Mammary epithelial cell (primary cell): ENCODE measurements at regions of chr5 and their contacts with region 1.

Region 1: GRCh38 chr5:137760330-137761188 is 6.4 kb upstream of the HNRNPA0 start:
- DNase-seq: peak; percentile 9
- H3K4me3 ChIP-seq: no peak overlapping the region
- H3K27ac ChIP-seq: no peak overlapping the region
- H3K4me1 ChIP-seq: peaks cover 6% of the 10 kb centered on the region
- H3K27me3 ChIP-seq: no peaks in the 10 kb centered on the region
- CTCF ChIP-seq: no peak

Region 2: GRCh38 chr5:137594717-137595116 is 165.8 kb before region 1 on chr5:
- CTCF ChIA-PET with region 1: no interaction called
- dilution Hi-C with region 1: no loop called
- in situ Hi-C with region 1: no loop called
- intact Hi-C with region 1: no loop called
- DNase-seq: no peak
- H3K4me3 ChIP-seq: no peak overlapping the region
- H3K27ac ChIP-seq: no peak overlapping the region
- H3K4me1 ChIP-seq: no peaks in the 10 kb centered on the region
- H3K27me3 ChIP-seq: peaks cover 3% of the 10 kb centered on the region
- CTCF ChIP-seq: no peak

Region 3: GRCh38 chr5:137847687-137848086 is 87.1 kb after region 1 on chr5:
- CTCF ChIA-PET with region 1: no interaction called
- dilution Hi-C with region 1: loop called (anchors 5 kb)
- in situ Hi-C with region 1: no loop called
- intact Hi-C with region 1: no loop called
- DNase-seq: no peak
- H3K4me3 ChIP-seq: no peak overlapping the region
- H3K27ac ChIP-seq: no peak overlapping the region
- H3K4me1 ChIP-seq: no peaks in the 10 kb centered on the region
- H3K27me3 ChIP-seq: no peaks in the 10 kb centered on the region
- CTCF ChIP-seq: no peak